ENCODE measurements at regions of chr1 and their contacts with region 1.

Region 1: GRCh38 chr1:32247983-32248889 is 1.2 kb downstream of the FAM167B start:
- DNase-seq: peak; percentile 45 to 82 (median 62)
- ATAC-seq: peak in 1 of 2 donors; percentile 3
- H3K4me3 Mint-ChIP-seq: peak overlapping the region; percentile 63 to 100 (median 84)
- H3K27ac Mint-ChIP-seq: peak overlapping the region; percentile 94 to 99 (median 98)
- H3K4me1 Mint-ChIP-seq: peaks cover 29 to 72% (median 52%) of the 10 kb centered on the region in 4 donors
- H3K27me3 Mint-ChIP-seq: peaks cover 0 to 1% (median 0%) of the 10 kb centered on the region in 5 donors

Region 2: GRCh38 chr1:32200226-32201010 is 47.8 kb before region 1 on chr1 and contains the start of gene CCDC28B:
- POLR2A ChIA-PET with region 1: interaction called, 14 read pairs
- DNase-seq: peak; percentile 34 to 74 (median 63)
- ATAC-seq: peak; percentile 54 to 56
- H3K4me3 Mint-ChIP-seq: peak within 1 kb of the TSS; percentile 86 to 97 (median 95)
- H3K27ac Mint-ChIP-seq: peak within 1 kb of the TSS; percentile 89 to 98 (median 94)
- H3K4me1 Mint-ChIP-seq: peaks cover 35 to 60% (median 59%) of the 10 kb centered on the region in 4 donors
- H3K27me3 Mint-ChIP-seq: no peaks in the 10 kb centered on the region
- polyA plus RNA-seq, gene CCDC28B: 15.4 to 17.3 (median 16.3) TPM

Region 3: DNA sequence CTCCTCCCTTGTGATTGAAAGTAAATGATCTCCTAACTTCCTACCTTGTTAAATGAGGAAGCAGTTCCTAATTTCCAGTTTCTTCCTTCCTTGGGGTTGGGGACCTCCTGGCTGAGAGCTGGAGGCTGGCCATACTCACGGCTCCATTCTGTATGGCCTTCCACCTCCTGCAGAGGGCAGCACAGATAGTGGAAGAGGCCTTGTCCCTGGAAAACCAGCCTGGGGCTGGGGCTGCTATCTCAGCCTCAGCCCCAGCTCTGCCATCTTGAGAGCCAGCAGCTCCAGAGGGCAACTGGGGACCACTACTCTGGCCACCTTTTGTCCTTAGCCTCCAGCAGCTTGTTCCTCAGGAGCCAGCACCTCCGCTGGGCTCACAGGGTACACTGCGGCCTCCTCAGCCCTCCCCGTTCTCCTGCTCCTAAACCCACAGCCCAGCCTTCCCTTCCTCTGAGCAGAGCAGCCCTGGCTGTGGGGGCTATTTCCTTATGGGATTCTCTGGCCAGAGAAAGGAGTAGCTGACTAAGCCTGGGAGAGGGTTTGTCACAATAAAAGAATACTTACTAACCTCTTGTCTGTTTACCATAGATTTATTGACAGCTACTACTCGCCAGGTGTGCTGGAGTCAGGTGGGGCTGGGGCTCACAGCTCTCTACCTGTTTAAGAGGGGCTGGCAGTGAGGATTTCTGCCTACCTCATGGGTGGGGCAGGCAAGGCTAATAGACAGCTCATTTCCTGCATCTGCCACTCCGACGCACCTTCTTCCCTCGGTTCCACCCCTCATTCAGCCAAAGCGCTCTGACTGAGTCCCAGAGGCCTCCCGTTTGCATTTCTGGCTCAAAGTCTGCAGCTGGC is 32.4 kb before region 1 on chr1:
- POLR2A ChIA-PET with region 1: interaction called, 2,080 read pairs
- DNase-seq: peak; percentile 34 to 76 (median 46)
- ATAC-seq: peak; percentile 90 to 92
- H3K4me3 Mint-ChIP-seq: no peak overlapping the region
- H3K27ac Mint-ChIP-seq: peak overlapping the region in 6 of 10 donors; percentile 22 to 80 (median 55)
- H3K4me1 Mint-ChIP-seq: peaks cover 7 to 22% (median 16%) of the 10 kb centered on the region in 4 donors
- H3K27me3 Mint-ChIP-seq: no peaks in the 10 kb centered on the region

Region 4: GRCh38 chr1:32321712-32322291 is 73.6 kb after region 1 on chr1:
- POLR2A ChIA-PET with region 1: interaction called, 35 read pairs
- DNase-seq: peak in 6 of 10 donors; percentile 16 to 55 (median 36)
- ATAC-seq: peak; percentile 90 to 91
- H3K4me3 Mint-ChIP-seq: peak overlapping the region; percentile 62 to 88 (median 72)
- H3K27ac Mint-ChIP-seq: peak overlapping the region; percentile 67 to 94 (median 91)
- H3K4me1 Mint-ChIP-seq: peaks cover 14 to 54% (median 36%) of the 10 kb centered on the region in 4 donors
- H3K27me3 Mint-ChIP-seq: no peaks in the 10 kb centered on the region

Region 5: GRCh38 chr1:32351399-32352238 is 103.4 kb after region 1 on chr1:
- POLR2A ChIA-PET with region 1: interaction called, 17 read pairs
- DNase-seq: peak; percentile 87 to 96 (median 90)
- ATAC-seq: peak; percentile 90 to 93
- H3K4me3 Mint-ChIP-seq: peak overlapping the region; percentile 74 to 91 (median 84)
- H3K27ac Mint-ChIP-seq: peak overlapping the region; percentile 53 to 93 (median 89)
- H3K4me1 Mint-ChIP-seq: peaks cover 25 to 62% (median 50%) of the 10 kb centered on the region in 4 donors
- H3K27me3 Mint-ChIP-seq: no peaks in the 10 kb centered on the region

Measured in naive thymus-derived CD8-positive, alpha-beta T cell (primary cell).